Common myeloid progenitor, CD34-positive (primary cell): ENCODE measurements at regions of chr11 and their contacts with region 1.

Region 1: GRCh38 chr11:63838678-63839507 is at the start of gene MARK2:
- DNase-seq: peak; percentile 97 to 99 (median 99)
- H3K4me3 ChIP-seq: peak within 1 kb of the TSS; percentile 68 to 96 (median 90)
- H3K27ac ChIP-seq: peak within 1 kb of the TSS; percentile 83 to 91
- H3K4me1 ChIP-seq: peaks cover 23 to 52% (median 40%) of the 10 kb centered on the region in 4 experiments
- H3K27me3 ChIP-seq: no peaks in the 10 kb centered on the region

Region 2: DNA sequence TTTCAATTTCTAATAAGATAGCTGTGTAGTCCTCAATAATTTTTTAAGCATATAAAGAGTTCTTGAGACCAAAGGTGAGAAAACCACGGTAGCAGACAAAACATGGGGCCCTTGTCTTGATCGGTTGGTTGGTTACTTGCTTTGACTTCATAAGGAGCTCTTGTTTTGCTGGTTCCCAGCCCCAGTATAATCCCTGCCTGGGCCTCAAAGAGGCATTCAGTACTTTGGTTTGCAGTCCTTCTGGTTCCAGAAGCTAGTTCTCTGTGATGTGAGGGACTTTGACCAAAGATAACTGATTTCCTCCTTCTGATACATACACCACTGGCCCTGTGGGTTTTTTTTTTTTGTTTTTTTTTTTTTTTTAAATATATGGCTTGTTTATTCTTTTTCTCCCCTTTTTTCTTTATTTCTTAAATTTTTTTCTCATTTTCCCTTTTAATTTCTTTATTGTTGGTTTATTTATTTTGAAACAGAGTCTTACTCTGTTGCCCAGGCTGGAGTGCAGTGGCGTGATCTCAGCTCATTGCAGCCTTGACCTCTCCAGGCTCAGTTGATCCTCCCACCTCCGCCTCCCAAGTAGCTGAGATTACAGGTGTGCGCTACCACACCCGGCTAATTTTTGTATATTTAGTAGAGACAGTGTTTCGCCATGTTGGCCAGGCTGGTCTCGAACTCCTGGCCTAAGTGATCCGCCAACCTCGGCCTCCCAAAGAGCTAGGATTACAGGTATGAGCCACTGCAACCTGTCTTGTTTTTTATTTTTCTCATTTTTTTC is 17.3 kb after region 1 on chr11:
- CTCF ChIA-PET with region 1: interaction called, 16 read pairs
- POLR2A ChIA-PET with region 1: interaction called, 6 read pairs
- DNase-seq: no peak
- H3K4me3 ChIP-seq: no peak overlapping the region
- H3K27ac ChIP-seq: no peak overlapping the region
- H3K4me1 ChIP-seq: peaks cover 3 to 22% (median 11%) of the 10 kb centered on the region in 4 experiments
- H3K27me3 ChIP-seq: no peaks in the 10 kb centered on the region

Region 3: GRCh38 chr11:63871962-63872799 is 33.3 kb after region 1 on chr11:
- CTCF ChIA-PET with region 1: interaction called, 71 read pairs
- POLR2A ChIA-PET with region 1: interaction called, 3 read pairs
- DNase-seq: peak; percentile 84 to 96 (median 96)
- H3K4me3 ChIP-seq: peak overlapping the region in 3 of 7 experiments; percentile 3 to 59 (median 48)
- H3K27ac ChIP-seq: no peak overlapping the region
- H3K4me1 ChIP-seq: peaks cover 17 to 83% (median 76%) of the 10 kb centered on the region in 4 experiments
- H3K27me3 ChIP-seq: no peaks in the 10 kb centered on the region

Region 4: GRCh38 chr11:63888170-63889086 is 49.5 kb after region 1 on chr11:
- CTCF ChIA-PET with region 1: interaction called, 41 read pairs
- POLR2A ChIA-PET with region 1: interaction called, 3 read pairs
- DNase-seq: peak; percentile 40 to 77 (median 75)
- H3K4me3 ChIP-seq: peak overlapping the region in 6 of 7 experiments; percentile 32 to 79 (median 55)
- H3K27ac ChIP-seq: peak overlapping the region; percentile 50 to 79
- H3K4me1 ChIP-seq: peaks cover 7 to 66% (median 47%) of the 10 kb centered on the region in 4 experiments
- H3K27me3 ChIP-seq: no peaks in the 10 kb centered on the region

Region 5: DNA sequence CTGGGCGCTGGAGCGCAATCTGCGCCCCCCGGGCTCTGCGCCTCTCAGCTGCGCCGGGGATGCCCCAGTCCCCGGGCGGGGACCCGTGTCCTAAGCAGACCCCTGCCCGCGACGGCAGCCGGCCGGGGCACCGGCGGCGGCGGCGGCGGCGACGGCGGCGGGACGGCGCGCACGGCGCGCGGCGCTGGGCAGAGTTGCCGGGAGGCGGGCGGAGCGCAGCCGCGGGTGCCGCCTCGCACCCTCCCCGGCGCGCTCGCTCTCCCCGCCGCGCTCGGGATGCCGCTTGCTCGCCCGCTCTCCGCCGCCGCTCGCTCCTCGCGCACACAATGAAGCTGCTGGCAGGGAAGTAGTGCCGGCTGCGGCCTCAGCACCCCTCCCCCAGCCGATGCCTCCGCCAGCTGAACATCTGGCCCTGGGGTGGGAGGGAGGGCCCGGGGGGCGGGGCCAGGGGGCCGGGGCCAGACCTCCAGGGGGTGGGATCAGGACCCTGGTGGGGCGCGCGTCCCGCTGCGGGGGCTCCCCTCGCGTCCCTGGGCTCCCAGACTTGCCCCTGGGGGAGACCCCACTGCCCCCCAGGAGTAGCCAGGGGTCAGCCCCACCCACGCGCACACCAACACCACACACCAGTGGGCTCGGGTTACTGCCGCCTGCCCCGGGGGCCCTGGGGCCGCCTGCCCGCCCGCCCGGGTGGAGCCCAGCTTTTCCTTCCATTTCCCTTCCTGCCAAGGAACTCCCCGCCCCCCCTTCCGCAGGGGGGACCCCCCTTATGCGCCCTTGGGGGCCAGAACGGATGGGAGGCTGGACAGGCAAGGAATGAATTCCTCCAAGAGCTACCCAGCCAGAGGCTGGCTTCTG is 78.2 kb after region 1 on chr11 and contains the start of gene RCOR2:
- CTCF ChIA-PET with region 1: interaction called, 22 read pairs
- POLR2A ChIA-PET with region 1: interaction called, 5 read pairs
- DNase-seq: peak; percentile 82 to 88 (median 86)
- H3K4me3 ChIP-seq: peak within 1 kb of the TSS; percentile 26 to 74 (median 61)
- H3K27ac ChIP-seq: no peak within 1 kb of the TSS
- H3K4me1 ChIP-seq: peaks cover 0 to 50% (median 40%) of the 10 kb centered on the region in 4 experiments
- H3K27me3 ChIP-seq: peaks cover 0 to 22% (median 0%) of the 10 kb centered on the region in 5 experiments

Region 6: GRCh38 chr11:63951779-63952536 is 113.1 kb after region 1 on chr11:
- CTCF ChIA-PET with region 1: interaction called, 80 read pairs
- POLR2A ChIA-PET with region 1: no interaction called
- DNase-seq: peak; percentile 54 to 86 (median 81)
- H3K4me3 ChIP-seq: peak overlapping the region in 2 of 7 experiments; percentile 31 to 35
- H3K27ac ChIP-seq: peak overlapping the region in 1 of 2 experiments; percentile 28
- H3K4me1 ChIP-seq: peaks cover 0 to 15% (median 13%) of the 10 kb centered on the region in 4 experiments
- H3K27me3 ChIP-seq: no peaks in the 10 kb centered on the region